ENCODE measurements at regions of chr20 and their contacts with region 1.

Region 1: DNA sequence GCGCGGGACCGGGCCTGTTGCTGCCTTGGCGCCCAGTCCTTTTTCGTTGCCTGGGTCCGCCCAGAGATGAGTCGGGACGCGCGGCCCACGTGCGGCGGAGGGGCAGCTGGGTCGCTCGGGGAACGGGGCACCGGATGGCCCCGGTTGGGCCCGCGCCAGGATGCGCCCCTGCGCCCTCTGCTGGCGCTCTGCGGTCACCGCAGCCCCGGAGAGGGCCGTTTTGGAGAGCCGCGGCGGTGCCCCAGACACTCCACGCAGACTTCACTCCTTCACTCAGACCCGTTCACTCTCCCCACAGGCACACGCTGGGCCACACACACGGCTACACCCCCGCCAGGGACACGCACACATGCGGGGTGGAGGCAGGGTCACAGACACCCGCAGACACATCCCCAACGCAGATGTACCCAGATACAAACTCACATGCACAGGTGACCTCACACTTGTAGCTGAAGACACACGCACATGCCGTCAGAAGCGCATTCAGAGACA is 38.8 kb downstream of the SRC start:
- DNase-seq: no peak
- H3K4me3 ChIP-seq: no peak overlapping the region
- H3K27me3 ChIP-seq: no peaks in the 10 kb centered on the region
- CTCF ChIP-seq: peak; percentile 82

Region 2: DNA sequence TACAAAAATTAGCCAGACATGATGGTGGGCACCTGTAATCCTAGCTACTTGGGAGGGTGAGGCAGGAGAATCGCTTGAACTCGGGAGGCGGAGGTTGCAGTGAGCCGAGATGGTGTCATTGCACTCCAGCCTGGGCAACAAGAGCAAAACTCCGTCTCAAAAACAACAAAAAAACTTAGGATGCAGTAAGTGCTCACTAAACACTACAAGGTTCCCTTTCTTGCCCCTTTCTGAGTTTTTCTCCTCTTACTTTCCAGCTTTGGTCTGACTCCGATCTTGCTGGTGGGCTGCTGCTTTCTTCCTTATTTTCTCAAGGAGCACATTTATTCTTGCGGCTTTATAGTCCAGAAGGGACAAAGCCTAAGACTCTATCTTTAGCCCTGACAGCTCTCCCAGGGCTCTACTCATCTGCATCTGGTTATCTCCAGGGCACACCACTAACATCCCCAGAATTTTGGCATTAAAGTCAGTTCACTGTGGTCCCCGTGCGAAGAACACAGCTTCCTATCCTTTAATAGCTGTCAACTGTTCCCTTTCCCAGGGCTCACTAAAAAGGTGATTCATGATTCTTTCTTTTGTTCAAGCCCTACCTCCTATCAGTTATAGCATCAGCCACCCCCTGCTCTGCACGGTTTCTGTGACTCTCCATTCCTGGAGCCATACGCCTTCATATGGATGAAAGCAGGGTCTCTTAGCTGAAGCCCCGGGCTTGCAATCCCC is 222.7 kb before region 1 on chr20:
- CTCF ChIA-PET with region 1: no interaction called
- POLR2A ChIA-PET with region 1: no interaction called
- DNase-seq: no peak
- H3K4me3 ChIP-seq: no peak overlapping the region
- H3K27me3 ChIP-seq: peaks cover 3% of the 10 kb centered on the region; the same call in 1 of the 2 replicates
- CTCF ChIP-seq: no peak

Region 3: GRCh38 chr20:37276494-37277252 is 108.1 kb before region 1 on chr20:
- CTCF ChIA-PET with region 1: interaction called, 173 read pairs
- POLR2A ChIA-PET with region 1: no interaction called
- DNase-seq: peak; percentile 57
- H3K4me3 ChIP-seq: no peak overlapping the region
- H3K27me3 ChIP-seq: no peaks in the 10 kb centered on the region; the same call in 1 of the 2 replicates
- CTCF ChIP-seq: peak; percentile 58

Region 4: GRCh38 chr20:37396416-37397075 is 11.8 kb after region 1 on chr20:
- CTCF ChIA-PET with region 1: interaction called, 10 read pairs
- POLR2A ChIA-PET with region 1: no interaction called
- DNase-seq: no peak
- H3K4me3 ChIP-seq: no peak overlapping the region
- H3K27me3 ChIP-seq: no peaks in the 10 kb centered on the region
- CTCF ChIP-seq: no peak

Region 5: GRCh38 chr20:38737887-38738286 is 1353.2 kb after region 1 on chr20:
- CTCF ChIA-PET with region 1: no interaction called
- POLR2A ChIA-PET with region 1: interaction called, 20 read pairs
- DNase-seq: no peak
- H3K4me3 ChIP-seq: no peak overlapping the region
- H3K27me3 ChIP-seq: peaks cover 11% of the 10 kb centered on the region
- CTCF ChIP-seq: no peak